GM10248 (cell line): ENCODE measurements at regions of chr15 and their contacts with region 1.

Region 1: DNA sequence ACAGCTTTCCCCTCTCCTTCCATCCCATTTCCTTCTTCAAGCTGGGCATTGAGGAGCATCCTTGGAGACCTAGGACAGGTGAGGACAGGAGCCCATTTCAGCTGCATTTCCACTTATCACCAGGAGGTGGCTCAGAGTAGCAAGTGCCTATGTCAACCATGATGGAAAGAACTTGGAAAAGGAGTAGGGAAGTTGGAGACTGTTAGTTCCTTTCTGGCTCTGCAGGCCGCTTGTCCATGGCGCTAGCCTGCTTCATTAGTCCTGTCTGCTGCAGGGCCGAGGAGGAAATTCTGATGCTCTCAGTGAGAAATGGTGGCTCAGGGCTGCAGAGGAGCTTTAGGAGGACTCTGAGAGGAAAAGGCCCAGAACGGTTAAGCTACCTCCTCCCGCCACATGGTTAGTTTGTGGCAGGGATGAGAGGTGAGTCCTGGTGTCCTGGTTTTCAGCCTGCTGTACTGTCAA is 7.0 kb upstream of the CD276 start:
- DNase-seq: peak; percentile 54
- CTCF ChIP-seq: peak; percentile 78

Region 2: GRCh38 chr15:73660455-73660854 is 16.7 kb before region 1 on chr15:
- CTCF ChIA-PET with region 1: interaction called, 28 read pairs
- POLR2A ChIA-PET with region 1: no interaction called
- DNase-seq: no peak
- CTCF ChIP-seq: no peak

Region 3: DNA sequence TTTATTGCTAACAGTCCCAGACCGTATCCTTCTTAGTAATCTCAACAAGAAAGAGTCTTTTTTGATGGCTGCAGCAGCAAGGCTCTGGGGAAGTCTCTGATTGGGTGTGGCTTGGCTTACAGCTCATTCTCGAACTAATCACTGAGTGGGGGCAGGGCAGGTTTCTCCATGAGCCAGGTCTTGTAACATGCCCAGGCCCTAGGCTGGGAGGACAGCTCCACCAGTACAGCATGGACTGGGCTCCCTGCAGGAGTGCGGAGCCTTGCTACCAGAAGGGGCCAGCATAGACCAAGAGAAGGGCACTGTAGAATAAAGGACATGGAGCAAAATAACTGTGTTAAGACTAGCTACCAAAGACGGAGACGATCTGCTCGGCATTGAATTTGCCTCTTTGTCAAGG is 14.2 kb after region 1 on chr15:
- CTCF ChIA-PET with region 1: interaction called, 392 read pairs
- POLR2A ChIA-PET with region 1: no interaction called
- DNase-seq: no peak
- CTCF ChIP-seq: no peak